Right cardiac atrium (tissue), 5 donors: ENCODE measurements at regions of chr13 and their contacts with region 1.

Region 1: GRCh38 chr13:24220086-24220703 is 59.7 kb downstream of the SPATA13 start:
- DNase-seq: no peak
- ATAC-seq: peak; percentile 80
- H3K4me3 ChIP-seq: no peak overlapping the region
- H3K27ac ChIP-seq: no peak overlapping the region
- H3K4me1 ChIP-seq: peaks cover 13% of the 10 kb centered on the region
- H3K27me3 ChIP-seq: no peaks in the 10 kb centered on the region

Region 2: DNA sequence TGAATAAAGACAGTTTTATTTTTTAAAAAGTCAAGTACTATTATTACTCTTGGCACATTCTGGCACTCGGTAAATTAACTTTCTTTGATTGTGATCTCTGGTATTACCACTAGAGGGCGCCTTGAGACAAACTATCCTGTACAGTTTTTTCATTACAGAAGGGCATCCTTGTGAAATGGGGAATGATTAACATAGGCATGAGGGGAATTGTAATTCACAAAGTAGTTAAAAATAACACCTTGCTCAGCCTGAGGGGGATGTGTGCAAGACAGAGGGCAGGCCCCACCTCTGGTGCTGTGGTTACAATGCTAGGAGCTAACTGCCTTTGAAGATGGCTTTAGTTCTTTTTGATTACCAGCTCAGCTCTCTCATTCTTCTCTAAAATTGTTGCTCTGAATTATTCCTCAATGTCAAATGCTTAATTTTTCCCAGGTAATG is 298.7 kb before region 1 on chr13:
- intact Hi-C with region 1: loop called (anchors 2 to 5 kb)
- DNase-seq: no peak
- ATAC-seq: peak in 1 of 2 donors; percentile 49
- H3K4me3 ChIP-seq: no peak overlapping the region
- H3K27ac ChIP-seq: no peak overlapping the region
- H3K4me1 ChIP-seq: no peaks in the 10 kb centered on the region
- H3K27me3 ChIP-seq: no peaks in the 10 kb centered on the region

Region 3: DNA sequence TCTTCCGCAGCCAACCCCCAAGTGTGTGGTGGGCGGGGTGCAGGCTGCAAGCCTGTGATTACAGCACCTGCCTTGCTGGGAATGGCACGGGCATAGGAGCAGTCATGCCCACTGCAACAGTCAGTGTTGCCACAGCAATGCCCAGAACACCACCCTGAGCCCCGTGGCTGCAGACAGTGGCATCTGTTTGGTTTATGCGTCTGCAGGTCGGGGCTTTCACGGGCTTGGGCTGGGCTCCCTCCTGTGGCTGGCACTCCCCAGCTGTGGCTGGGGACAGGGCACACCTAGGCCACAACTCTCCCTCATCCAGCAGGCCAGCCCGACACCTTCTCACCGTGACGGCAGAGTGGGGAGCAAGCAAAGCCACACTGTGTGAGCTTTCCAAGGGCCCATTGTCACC is 207.5 kb before region 1 on chr13:
- intact Hi-C with region 1: loop called in 1 of 4 experiments (anchors 5 kb)
- DNase-seq: no peak
- ATAC-seq: no peak
- H3K4me3 ChIP-seq: no peak overlapping the region
- H3K27ac ChIP-seq: no peak overlapping the region
- H3K4me1 ChIP-seq: no peaks in the 10 kb centered on the region
- H3K27me3 ChIP-seq: no peaks in the 10 kb centered on the region

Region 4: DNA sequence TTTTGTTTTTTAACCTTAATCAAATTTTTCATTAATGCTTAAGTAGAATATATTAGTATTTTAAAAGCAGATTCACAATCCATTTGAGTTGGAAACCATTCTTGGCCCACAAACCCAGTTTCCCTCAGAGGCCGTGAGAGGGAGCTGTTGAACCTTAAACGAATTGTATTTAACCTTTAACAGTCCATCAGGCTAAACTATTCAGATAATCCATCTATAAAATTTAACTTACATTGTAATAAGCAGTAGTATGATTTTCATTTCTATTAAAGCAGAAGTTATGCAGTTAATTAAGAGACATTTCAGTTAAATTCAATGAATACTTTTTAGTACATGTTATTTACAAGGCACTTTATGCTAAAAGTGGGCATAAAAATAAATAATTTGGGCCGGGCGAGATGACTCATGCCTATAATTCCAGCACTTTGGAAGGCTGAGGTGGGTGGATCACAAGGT is 199.8 kb before region 1 on chr13:
- intact Hi-C with region 1: loop called (anchors 2 to 5 kb)
- DNase-seq: peak in 1 of 3 donors; percentile 76
- ATAC-seq: peak; percentile 51 to 71
- H3K4me3 ChIP-seq: no peak overlapping the region
- H3K27ac ChIP-seq: no peak overlapping the region
- H3K4me1 ChIP-seq: no peaks in the 10 kb centered on the region
- H3K27me3 ChIP-seq: no peaks in the 10 kb centered on the region

Region 5: GRCh38 chr13:24053519-24054251 is 166.5 kb before region 1 on chr13:
- intact Hi-C with region 1: loop called in 3 of 4 experiments (anchors 10 kb)
- DNase-seq: peak; percentile 41 to 68 (median 65)
- ATAC-seq: peak; percentile 83 to 85
- H3K4me3 ChIP-seq: no peak overlapping the region
- H3K27ac ChIP-seq: peak overlapping the region; percentile 34
- H3K4me1 ChIP-seq: no peaks in the 10 kb centered on the region
- H3K27me3 ChIP-seq: no peaks in the 10 kb centered on the region

Region 6: DNA sequence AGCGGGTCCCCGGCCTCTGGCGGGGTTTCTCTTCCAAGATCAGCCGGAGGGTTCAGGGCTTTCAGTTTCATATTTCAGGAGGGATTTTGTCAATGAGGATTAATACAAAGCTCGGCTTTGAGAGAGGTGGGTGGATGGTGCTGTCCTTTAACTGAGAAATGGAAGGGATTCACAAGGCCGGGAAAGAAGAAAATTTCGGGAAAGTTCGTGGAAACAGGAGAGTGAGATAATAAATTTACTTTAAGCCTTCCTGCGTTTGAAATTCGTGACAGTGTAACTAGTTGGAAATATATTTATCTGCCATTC is 292.7 kb after region 1 on chr13:
- intact Hi-C with region 1: no loop called
- DNase-seq: no peak
- ATAC-seq: no peak
- H3K4me3 ChIP-seq: peak overlapping the region; percentile 64
- H3K27ac ChIP-seq: peak overlapping the region; percentile 55
- H3K4me1 ChIP-seq: peaks cover 3% of the 10 kb centered on the region
- H3K27me3 ChIP-seq: no peaks in the 10 kb centered on the region